Sigmoid colon (tissue), 7 donors: ENCODE measurements at regions of chr4 and their contacts with region 1.

Region 1: DNA sequence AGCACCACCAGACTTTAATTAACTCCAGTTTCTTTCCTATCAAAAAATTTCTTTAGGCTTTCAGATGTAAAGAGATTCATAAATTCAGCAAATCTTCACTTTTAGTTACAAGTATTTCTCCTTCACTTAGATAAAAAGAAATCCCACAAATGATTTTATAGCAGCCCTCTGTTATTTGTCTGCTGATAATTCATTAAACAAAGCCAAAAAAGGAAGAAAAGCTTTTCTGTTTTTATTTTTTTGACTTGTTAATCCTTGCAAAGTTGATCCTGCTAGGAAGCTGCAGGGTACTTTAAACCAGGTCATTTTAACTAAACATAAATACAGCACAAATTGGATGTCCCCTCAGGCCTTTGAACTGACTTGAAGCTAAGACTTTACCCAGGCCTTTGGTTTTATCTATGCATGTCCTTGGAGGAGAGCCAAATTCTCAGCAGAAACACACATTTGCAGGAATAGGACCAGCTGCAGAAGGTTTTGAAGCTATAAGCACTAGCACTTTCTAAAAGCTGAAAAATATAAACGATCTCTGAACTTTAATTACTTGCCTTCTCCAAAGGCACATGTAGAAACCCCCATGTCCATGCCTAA is 57.5 kb downstream of the PCDH18 start:
- DNase-seq: no peak
- H3K4me3 ChIP-seq: no peak overlapping the region
- H3K27ac ChIP-seq: peak overlapping the region in 3 of 4 donors; percentile 50 to 65 (median 59)
- H3K4me1 ChIP-seq: peaks cover 0 to 44% (median 16%) of the 10 kb centered on the region in 4 donors
- H3K27me3 ChIP-seq: no peaks in the 10 kb centered on the region
- CTCF ChIP-seq: no peak
- EP300 ChIP-seq: no peak
- POLR2A ChIP-seq: no peak

Region 2: GRCh38 chr4:137370206-137370633 is 104.6 kb before region 1 on chr4:
- intact Hi-C with region 1: loop called (anchors 10 kb)
- DNase-seq: no peak
- H3K4me3 ChIP-seq: no peak overlapping the region
- H3K27ac ChIP-seq: peak overlapping the region; percentile 10 to 67 (median 62)
- H3K4me1 ChIP-seq: peaks cover 0 to 44% (median 23%) of the 10 kb centered on the region in 4 donors
- H3K27me3 ChIP-seq: no peaks in the 10 kb centered on the region
- CTCF ChIP-seq: no peak
- EP300 ChIP-seq: no peak
- POLR2A ChIP-seq: no peak

Region 3: DNA sequence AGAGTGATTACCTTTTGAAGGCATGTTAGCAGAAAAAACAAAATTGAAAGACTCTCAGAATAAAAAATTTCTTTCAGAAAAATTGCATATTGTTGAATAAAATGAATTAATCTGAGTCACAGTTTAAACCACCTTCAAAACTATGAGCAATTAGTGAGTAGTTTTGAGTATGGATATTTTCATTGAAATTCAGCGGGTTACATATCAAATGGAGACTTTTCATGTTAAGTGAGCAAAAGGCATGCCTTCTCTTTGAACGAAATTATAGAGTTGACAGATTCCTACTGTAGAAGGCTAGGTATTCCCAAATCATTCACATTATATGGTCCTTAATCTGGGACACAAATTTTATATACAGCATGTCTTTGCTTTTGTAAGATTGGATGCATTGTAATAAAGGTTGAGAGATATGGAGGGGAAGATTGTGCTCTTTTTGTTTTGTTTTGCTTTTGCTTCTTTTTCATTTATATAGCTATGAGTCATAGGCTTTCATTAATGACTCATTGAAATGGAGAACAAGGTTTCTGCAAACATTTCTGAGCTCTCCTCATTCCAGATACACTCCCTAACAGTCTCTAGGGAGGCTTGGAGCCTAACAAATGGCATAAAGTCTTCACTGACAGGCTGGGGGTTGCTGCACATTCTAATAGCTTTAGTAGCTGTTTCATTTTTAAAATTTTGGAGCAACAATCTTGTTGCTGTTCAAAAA is 35.9 kb after region 1 on chr4:
- intact Hi-C with region 1: loop called (anchors 5 kb)
- DNase-seq: no peak
- H3K4me3 ChIP-seq: no peak overlapping the region
- H3K27ac ChIP-seq: peak overlapping the region; percentile 47 to 73 (median 68)
- H3K4me1 ChIP-seq: peaks cover 0 to 36% (median 20%) of the 10 kb centered on the region in 4 donors
- H3K27me3 ChIP-seq: no peaks in the 10 kb centered on the region
- CTCF ChIP-seq: no peak
- EP300 ChIP-seq: no peak
- POLR2A ChIP-seq: no peak